B cell (primary cell): ENCODE measurements at regions of chr16 and their contacts with region 1.

Region 1: DNA sequence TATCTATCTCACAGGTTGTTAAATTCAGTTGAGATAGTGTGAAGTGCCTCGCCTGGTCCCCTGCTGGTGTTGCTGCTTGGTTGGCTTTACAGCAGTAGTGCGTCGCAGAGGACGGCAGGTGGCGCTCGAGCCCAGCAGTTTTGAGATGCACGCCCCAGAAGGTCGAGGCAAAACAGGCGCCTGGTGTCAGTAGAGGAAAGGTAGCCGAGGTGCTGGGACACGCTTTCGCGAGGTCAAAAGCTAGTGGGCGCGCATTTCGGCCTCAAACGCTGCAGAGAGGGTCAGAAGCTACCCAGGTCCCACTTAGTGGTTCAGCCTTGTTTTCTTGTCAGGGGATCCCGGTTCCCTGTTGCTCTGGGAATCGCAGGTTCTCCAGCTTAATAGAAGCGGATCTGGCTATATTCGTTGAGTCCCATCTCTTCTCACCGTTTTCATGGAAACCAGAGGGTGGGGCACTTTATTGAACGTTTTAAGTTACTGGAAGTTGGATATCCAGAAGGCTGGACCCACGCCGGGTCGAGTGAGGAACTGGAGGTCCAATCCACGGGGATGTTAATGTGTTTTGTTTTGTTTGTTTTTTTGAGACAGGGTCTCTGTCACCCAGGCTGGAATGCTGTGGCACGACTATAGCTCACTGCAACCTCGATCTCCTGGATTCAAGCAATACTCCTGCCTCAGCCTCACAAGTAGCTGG is 10.3 kb upstream of the ZFP90 start:
- DNase-seq: peak; percentile 93
- ATAC-seq: peak; percentile 81
- H3K4me3 ChIP-seq: no peak overlapping the region
- H3K4me3 Mint-ChIP-seq: peak overlapping the region; percentile 90
- H3K27ac ChIP-seq: no peak overlapping the region
- H3K27ac Mint-ChIP-seq: peak overlapping the region; percentile 83
- H3K4me1 ChIP-seq: peaks cover 16 to 22% of the 10 kb centered on the region in 2 donors
- H3K4me1 Mint-ChIP-seq: peaks cover 17% of the 10 kb centered on the region
- H3K27me3 ChIP-seq: no peaks in the 10 kb centered on the region
- H3K27me3 Mint-ChIP-seq: no peaks in the 10 kb centered on the region
- CTCF ChIP-seq: peak; percentile 94

Region 2: GRCh38 chr16:68538880-68539701 is 10.3 kb after region 1 on chr16 and contains the start of gene ZFP90:
- CTCF ChIA-PET with region 1: interaction called, 14 read pairs
- POLR2A ChIA-PET with region 1: interaction called, 7 read pairs
- intact Hi-C with region 1: loop called (anchors 1 kb)
- DNase-seq: peak; percentile 91
- ATAC-seq: peak; percentile 96
- H3K4me3 ChIP-seq: peak within 1 kb of the TSS; percentile 67 to 97 (median 90)
- H3K4me3 Mint-ChIP-seq: peak within 1 kb of the TSS; percentile 95
- H3K27ac ChIP-seq: peak within 1 kb of the TSS; percentile 80 to 82
- H3K27ac Mint-ChIP-seq: peak within 1 kb of the TSS; percentile 97
- H3K4me1 ChIP-seq: peaks cover 8 to 16% of the 10 kb centered on the region in 2 donors
- H3K4me1 Mint-ChIP-seq: peaks cover 15% of the 10 kb centered on the region
- H3K27me3 ChIP-seq: no peaks in the 10 kb centered on the region
- H3K27me3 Mint-ChIP-seq: no peaks in the 10 kb centered on the region
- CTCF ChIP-seq: no peak
- total RNA-seq, gene ZFP90: 30.7 and 36.0 TPM in 2 replicates

Region 3: GRCh38 chr16:68704232-68704867 is 175.5 kb after region 1 on chr16:
- CTCF ChIA-PET with region 1: no interaction called
- POLR2A ChIA-PET with region 1: no interaction called
- intact Hi-C with region 1: loop called (anchors 1 kb)
- DNase-seq: peak; percentile 55
- ATAC-seq: peak; percentile 60
- H3K4me3 ChIP-seq: no peak overlapping the region
- H3K4me3 Mint-ChIP-seq: no peak overlapping the region
- H3K27ac ChIP-seq: no peak overlapping the region
- H3K27ac Mint-ChIP-seq: peak overlapping the region; percentile 6
- H3K4me1 ChIP-seq: no peaks in the 10 kb centered on the region
- H3K4me1 Mint-ChIP-seq: peaks cover 3% of the 10 kb centered on the region
- H3K27me3 ChIP-seq: no peaks in the 10 kb centered on the region
- H3K27me3 Mint-ChIP-seq: peaks cover 12% of the 10 kb centered on the region
- CTCF ChIP-seq: peak; percentile 64

Region 4: GRCh38 chr16:69123910-69124309 is 595.1 kb after region 1 on chr16:
- CTCF ChIA-PET with region 1: interaction called, 83 read pairs
- POLR2A ChIA-PET with region 1: no interaction called
- intact Hi-C with region 1: no loop called
- DNase-seq: peak; percentile 77
- ATAC-seq: peak; percentile 70
- H3K4me3 ChIP-seq: no peak overlapping the region
- H3K4me3 Mint-ChIP-seq: no peak overlapping the region
- H3K27ac ChIP-seq: no peak overlapping the region
- H3K27ac Mint-ChIP-seq: no peak overlapping the region
- H3K4me1 ChIP-seq: no peaks in the 10 kb centered on the region
- H3K4me1 Mint-ChIP-seq: peaks cover 14% of the 10 kb centered on the region
- H3K27me3 ChIP-seq: no peaks in the 10 kb centered on the region
- H3K27me3 Mint-ChIP-seq: no peaks in the 10 kb centered on the region
- CTCF ChIP-seq: peak; percentile 81

Region 5: GRCh38 chr16:69286941-69287713 is 758.3 kb after region 1 on chr16:
- CTCF ChIA-PET with region 1: interaction called, 11 read pairs
- POLR2A ChIA-PET with region 1: no interaction called
- intact Hi-C with region 1: no loop called
- DNase-seq: peak; percentile 75
- ATAC-seq: no peak
- H3K4me3 ChIP-seq: no peak overlapping the region
- H3K4me3 Mint-ChIP-seq: no peak overlapping the region
- H3K27ac ChIP-seq: no peak overlapping the region
- H3K27ac Mint-ChIP-seq: no peak overlapping the region
- H3K4me1 ChIP-seq: no peaks in the 10 kb centered on the region
- H3K4me1 Mint-ChIP-seq: peaks cover 1% of the 10 kb centered on the region
- H3K27me3 ChIP-seq: no peaks in the 10 kb centered on the region
- H3K27me3 Mint-ChIP-seq: no peaks in the 10 kb centered on the region
- CTCF ChIP-seq: peak; percentile 79